GM12878 (cell line): ENCODE measurements at regions of chr2 and their contacts with region 1.

Region 1: GRCh38 chr2:30336978-30337841 is 105.9 kb downstream of the LBH start:
- DNase-seq: peak; percentile 92
- ATAC-seq: peak; percentile 90
- H3K4me3 ChIP-seq: peak overlapping the region; percentile 66
- H3K27ac ChIP-seq: peak overlapping the region; percentile 98
- H3K4me1 ChIP-seq: peaks cover 72% of the 10 kb centered on the region
- H3K27me3 ChIP-seq: no peaks in the 10 kb centered on the region
- CTCF ChIP-seq: no peak
- EP300 ChIP-seq: peak; percentile 31 to 51; a peak in 2 of 4 replicates
- POLR2A ChIP-seq: peak; percentile 56
- RAD21 ChIP-seq: 0 out of 2 replicates have a peak, but pooled peaks have one; percentile 18

Region 2: GRCh38 chr2:30208452-30208851 is 128.8 kb before region 1 on chr2:
- CTCF ChIA-PET with region 1: interaction called, 108 read pairs
- POLR2A ChIA-PET with region 1: interaction called, 4 read pairs
- RAD21 ChIA-PET with region 1: interaction called, 97 read pairs
- SMC1A ChIA-PET with region 1: interaction called, 119 read pairs
- in situ Hi-C with region 1: no loop called
- intact Hi-C with region 1: no loop called
- DNase-seq: no peak
- ATAC-seq: peak; percentile 82
- H3K4me3 ChIP-seq: no peak overlapping the region
- H3K27ac ChIP-seq: no peak overlapping the region
- H3K4me1 ChIP-seq: peaks cover 2% of the 10 kb centered on the region
- H3K27me3 ChIP-seq: no peaks in the 10 kb centered on the region; a peak in 1 of 4 replicates
- CTCF ChIP-seq: peak; percentile 84 to 90 (median 88)
- EP300 ChIP-seq: no peak
- POLR2A ChIP-seq: no peak
- RAD21 ChIP-seq: peak; percentile 94

Region 3: DNA sequence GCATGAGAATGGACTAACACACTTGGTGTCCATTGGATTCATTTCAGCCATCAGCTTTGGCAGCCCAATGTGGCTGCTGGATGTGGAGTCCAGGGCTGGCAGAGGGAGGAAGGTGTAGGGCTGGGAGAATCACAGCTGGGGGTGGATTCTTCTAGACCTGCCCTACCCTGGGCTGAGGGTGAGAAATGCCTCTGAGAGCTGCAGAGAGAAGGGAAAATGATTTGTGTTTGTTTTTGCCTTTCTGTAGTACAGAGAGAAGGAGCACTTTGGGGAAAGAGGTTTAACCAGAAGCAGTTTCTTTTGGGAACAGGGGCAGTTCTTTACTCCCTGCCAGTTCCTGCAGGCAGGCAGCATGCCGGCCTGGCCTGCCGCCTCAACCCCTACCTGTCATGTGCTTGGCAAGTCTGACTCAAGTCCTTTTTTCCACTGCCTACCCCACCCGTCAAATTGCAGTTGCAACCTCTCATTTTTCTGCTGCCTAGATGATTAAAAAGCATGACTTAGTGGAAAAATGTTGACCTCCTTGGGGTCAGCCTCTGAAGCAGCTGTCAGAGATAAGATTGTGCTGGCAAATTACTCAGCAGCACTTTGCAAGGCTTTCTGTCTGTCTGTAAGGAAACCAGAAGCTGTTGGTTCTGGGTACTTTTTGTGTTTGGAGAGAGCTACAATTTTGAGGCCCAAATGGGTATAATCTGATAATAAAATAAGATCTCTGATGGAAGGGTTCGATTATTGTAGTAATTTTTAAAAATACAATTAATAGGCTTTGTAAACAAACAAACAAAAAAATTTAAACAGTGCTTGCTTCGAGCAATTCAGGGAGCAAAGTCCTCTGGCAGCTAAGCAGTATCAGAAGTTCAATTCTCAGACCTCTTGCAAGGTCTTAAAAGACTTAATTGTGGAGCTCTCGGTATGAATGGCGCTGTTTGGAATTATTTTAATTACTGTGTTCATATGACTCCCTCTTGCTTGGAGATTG is 84.2 kb before region 1 on chr2:
- CTCF ChIA-PET with region 1: interaction called, 4 read pairs
- POLR2A ChIA-PET with region 1: no interaction called
- RAD21 ChIA-PET with region 1: interaction called, 12 read pairs
- SMC1A ChIA-PET with region 1: interaction called, 25 read pairs
- in situ Hi-C with region 1: no loop called
- intact Hi-C with region 1: no loop called
- DNase-seq: no peak
- ATAC-seq: peak; percentile 64
- H3K4me3 ChIP-seq: no peak overlapping the region
- H3K27ac ChIP-seq: no peak overlapping the region
- H3K4me1 ChIP-seq: no peaks in the 10 kb centered on the region; the same call in 1 of the 2 replicates
- H3K27me3 ChIP-seq: no peaks in the 10 kb centered on the region
- CTCF ChIP-seq: no peak
- EP300 ChIP-seq: no peak
- POLR2A ChIP-seq: no peak
- RAD21 ChIP-seq: no peak

Region 4: GRCh38 chr2:30287857-30288513 is 49.2 kb before region 1 on chr2:
- CTCF ChIA-PET with region 1: interaction called, 56 read pairs
- POLR2A ChIA-PET with region 1: interaction called, 29 read pairs
- RAD21 ChIA-PET with region 1: interaction called, 108 read pairs
- SMC1A ChIA-PET with region 1: interaction called, 96 read pairs
- in situ Hi-C with region 1: no loop called
- intact Hi-C with region 1: loop called (anchors 1 kb)
- DNase-seq: peak; percentile 55
- ATAC-seq: peak; percentile 89
- H3K4me3 ChIP-seq: peak overlapping the region; percentile 40; the same call in 1 of the 2 replicates
- H3K27ac ChIP-seq: peak overlapping the region; percentile 85
- H3K4me1 ChIP-seq: peaks cover 26% of the 10 kb centered on the region
- H3K27me3 ChIP-seq: no peaks in the 10 kb centered on the region
- CTCF ChIP-seq: no peak
- EP300 ChIP-seq: peak; percentile 21 to 43; a peak in 1 of 4 replicates
- POLR2A ChIP-seq: no peak
- RAD21 ChIP-seq: no peak

Region 5: DNA sequence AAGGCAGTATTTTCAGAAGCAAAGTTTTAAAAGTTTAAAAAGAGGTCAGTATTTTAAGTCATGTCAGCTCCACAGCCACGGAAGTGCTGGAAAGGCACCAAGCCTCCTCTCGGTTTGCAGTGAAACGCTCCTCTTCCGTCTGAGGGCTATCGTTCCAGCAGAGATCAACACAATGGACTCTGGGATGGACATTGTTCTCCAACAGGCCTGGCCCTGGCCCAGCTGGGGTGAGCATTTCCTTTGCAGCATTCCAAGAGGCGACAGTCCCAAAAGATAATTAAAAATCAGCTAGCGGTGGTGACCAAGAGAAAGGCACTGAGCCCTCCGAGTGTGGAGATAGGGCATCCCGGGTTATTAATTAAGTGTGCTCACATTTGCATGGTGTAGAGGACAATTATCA is 13.9 kb after region 1 on chr2:
- CTCF ChIA-PET with region 1: interaction called, 7 read pairs
- POLR2A ChIA-PET with region 1: no interaction called
- RAD21 ChIA-PET with region 1: interaction called, 14 read pairs
- SMC1A ChIA-PET with region 1: interaction called, 43 read pairs
- in situ Hi-C with region 1: no loop called
- intact Hi-C with region 1: no loop called
- DNase-seq: no peak
- ATAC-seq: no peak
- H3K4me3 ChIP-seq: no peak overlapping the region
- H3K27ac ChIP-seq: no peak overlapping the region
- H3K4me1 ChIP-seq: no peaks in the 10 kb centered on the region
- H3K27me3 ChIP-seq: no peaks in the 10 kb centered on the region
- CTCF ChIP-seq: no peak
- EP300 ChIP-seq: no peak
- POLR2A ChIP-seq: no peak
- RAD21 ChIP-seq: no peak

Region 6: GRCh38 chr2:30447149-30448045 is 110.2 kb after region 1 on chr2 and contains the start of gene LCLAT1:
- CTCF ChIA-PET with region 1: interaction called, 5 read pairs
- POLR2A ChIA-PET with region 1: no interaction called
- RAD21 ChIA-PET with region 1: interaction called, 20 read pairs
- SMC1A ChIA-PET with region 1: interaction called, 26 read pairs
- in situ Hi-C with region 1: no loop called
- intact Hi-C with region 1: loop called (anchors 5 kb)
- DNase-seq: peak; percentile 44
- ATAC-seq: peak; percentile 95
- H3K4me3 ChIP-seq: peak within 1 kb of the TSS; percentile 93
- H3K27ac ChIP-seq: peak within 1 kb of the TSS; percentile 77
- H3K4me1 ChIP-seq: no peaks in the 10 kb centered on the region; the same call in 1 of the 2 replicates
- H3K27me3 ChIP-seq: no peaks in the 10 kb centered on the region
- CTCF ChIP-seq: no peak; a peak in 1 of 6 replicates
- EP300 ChIP-seq: no peak
- POLR2A ChIP-seq: peak; percentile 84
- RAD21 ChIP-seq: no peak
- polyA plus RNA-seq, gene LCLAT1: 8.1 to 33.0 TPM

Region 7: GRCh38 chr2:30631051-30631671 is 294.0 kb after region 1 on chr2:
- CTCF ChIA-PET with region 1: no interaction called
- POLR2A ChIA-PET with region 1: no interaction called
- RAD21 ChIA-PET with region 1: interaction called, 18 read pairs
- SMC1A ChIA-PET with region 1: interaction called, 4 read pairs
- in situ Hi-C with region 1: no loop called
- intact Hi-C with region 1: loop called (anchors 5 kb)
- DNase-seq: peak; percentile 48
- ATAC-seq: peak; percentile 56
- H3K4me3 ChIP-seq: no peak overlapping the region
- H3K27ac ChIP-seq: no peak overlapping the region
- H3K4me1 ChIP-seq: peaks cover 25% of the 10 kb centered on the region
- H3K27me3 ChIP-seq: no peaks in the 10 kb centered on the region
- CTCF ChIP-seq: no peak
- EP300 ChIP-seq: no peak
- POLR2A ChIP-seq: no peak
- RAD21 ChIP-seq: no peak